ENCODE measurements at regions of chr14 and their contacts with region 1.

Region 1: DNA sequence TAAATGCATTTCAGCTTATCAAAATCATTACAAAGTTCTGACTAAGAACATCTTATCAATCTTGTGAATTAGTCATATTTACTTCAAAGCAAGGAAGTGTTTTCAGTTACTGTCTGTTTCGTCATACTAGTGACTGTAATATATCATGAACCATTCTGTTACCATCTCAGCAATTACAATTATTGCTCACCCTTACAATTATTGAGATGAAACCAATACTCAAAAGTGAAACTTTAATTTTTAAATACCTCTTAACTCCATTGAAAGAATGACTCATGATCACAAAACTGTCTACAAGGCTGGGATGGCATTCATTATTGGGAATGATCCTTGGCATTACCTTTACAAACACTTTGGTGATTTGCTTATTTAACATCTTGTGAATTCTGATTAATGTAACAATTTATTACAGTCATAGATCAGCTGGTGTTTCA is 90.3 kb downstream of the RPS6KA5 start:
- DNase-seq: no peak
- H3K4me3 Mint-ChIP-seq: peak overlapping the region; percentile 71
- H3K27ac Mint-ChIP-seq: peak overlapping the region; percentile 90
- H3K4me1 Mint-ChIP-seq: peaks cover 50% of the 10 kb centered on the region
- H3K27me3 Mint-ChIP-seq: no peaks in the 10 kb centered on the region

Region 2: DNA sequence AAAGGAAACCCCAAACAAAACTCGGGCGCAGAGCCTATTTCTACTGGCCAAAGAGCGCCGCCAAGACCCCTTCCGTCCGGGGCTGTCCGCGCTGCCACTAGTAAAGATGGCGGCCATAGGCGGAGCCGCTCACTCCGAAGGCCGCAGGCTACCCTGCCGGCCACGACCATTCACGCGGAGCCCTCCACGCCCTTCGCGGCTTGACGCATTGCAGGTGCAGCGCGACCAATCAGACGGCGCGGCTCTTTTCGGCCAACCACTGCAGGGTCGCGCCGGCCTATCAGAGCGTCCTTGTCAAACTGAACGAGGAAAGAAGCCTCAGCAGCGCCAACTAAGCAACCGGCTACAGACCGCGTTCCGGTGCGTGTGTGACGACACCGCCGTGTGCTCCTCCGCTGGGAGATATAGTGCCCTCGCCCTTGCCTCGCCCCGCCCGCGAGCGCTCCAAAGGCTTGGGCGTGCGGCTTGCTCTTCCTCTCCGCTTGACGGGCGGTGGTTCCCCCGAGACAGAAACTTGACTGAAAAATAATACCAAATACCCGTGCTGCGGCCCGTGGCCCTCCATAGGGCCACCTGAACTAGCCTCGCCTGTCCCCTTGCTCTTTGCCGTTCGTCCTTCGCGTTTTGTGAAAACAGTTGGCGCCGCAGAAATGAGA is 587.0 kb before region 1 on chr14:
- intact Hi-C with region 1: loop called (anchors 10 kb)
- DNase-seq: peak; percentile 98
- H3K4me3 Mint-ChIP-seq: no peak overlapping the region
- H3K27ac Mint-ChIP-seq: no peak overlapping the region
- H3K4me1 Mint-ChIP-seq: peaks cover 6% of the 10 kb centered on the region
- H3K27me3 Mint-ChIP-seq: peaks cover 1% of the 10 kb centered on the region

Region 3: DNA sequence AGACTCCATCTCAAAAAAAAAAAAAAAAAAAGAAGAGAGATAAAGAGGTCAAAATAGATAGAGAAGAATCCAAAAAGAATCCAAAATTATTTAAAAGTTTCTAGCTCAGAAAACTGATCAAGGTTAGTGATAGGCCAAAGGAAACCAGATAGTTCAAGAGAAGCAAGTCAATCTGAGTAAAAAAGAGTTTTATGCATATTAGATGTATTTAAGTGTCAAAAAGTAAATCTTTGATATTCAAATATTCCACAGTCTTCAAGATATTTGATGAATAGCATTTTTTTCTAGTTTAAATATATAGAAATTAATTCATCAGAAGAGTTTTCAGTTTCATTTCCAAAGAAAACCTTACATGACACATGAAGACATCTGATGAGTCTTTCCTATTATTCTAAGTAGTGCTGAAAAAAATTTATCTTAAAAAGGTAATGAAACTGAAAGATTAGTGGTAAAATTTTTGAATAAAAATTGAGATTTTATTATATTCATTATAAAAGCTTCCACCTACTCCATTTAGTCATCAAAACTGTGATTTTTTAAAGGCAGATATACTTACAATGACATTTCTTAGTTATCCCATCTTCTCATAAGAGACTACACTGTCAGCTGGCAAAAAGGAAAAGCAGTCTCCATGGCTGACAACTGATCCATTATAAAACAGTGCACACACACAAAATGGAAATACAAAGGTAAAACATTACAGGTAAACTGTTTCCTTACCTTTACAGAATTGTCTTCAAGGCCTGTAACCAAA is 21.7 kb after region 1 on chr14:
- intact Hi-C with region 1: loop called (anchors 1 kb)
- DNase-seq: no peak
- H3K4me3 Mint-ChIP-seq: no peak overlapping the region
- H3K27ac Mint-ChIP-seq: no peak overlapping the region
- H3K4me1 Mint-ChIP-seq: peaks cover 56% of the 10 kb centered on the region
- H3K27me3 Mint-ChIP-seq: no peaks in the 10 kb centered on the region

Region 4: DNA sequence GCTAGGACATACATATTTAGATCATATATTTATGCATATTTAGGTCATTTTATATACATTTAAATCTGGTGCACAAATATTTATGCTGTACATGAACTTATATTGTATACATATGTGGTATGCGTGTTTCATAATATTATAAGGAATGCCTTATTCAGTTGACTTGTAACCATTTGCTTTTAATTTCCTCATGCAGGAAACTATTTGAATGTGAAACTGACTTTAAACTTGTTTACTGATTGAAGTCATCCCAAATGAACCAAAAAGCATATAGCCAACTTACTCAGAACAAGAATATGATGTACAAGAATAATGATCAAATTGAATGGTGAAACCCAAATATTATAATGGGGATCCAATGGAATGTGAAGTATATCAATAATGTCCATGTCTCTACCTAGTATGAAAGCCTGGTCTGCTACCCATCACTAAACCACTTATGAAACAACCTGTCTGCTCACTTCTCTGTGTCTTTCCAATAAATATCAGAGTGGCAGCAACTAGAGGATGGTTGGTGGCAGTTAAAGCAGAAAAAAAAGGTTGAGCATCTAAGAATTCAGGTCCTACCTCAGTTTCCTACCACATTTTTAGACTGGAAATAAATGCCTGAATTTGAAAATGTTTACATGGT is 51.9 kb after region 1 on chr14:
- intact Hi-C with region 1: loop called (anchors 1 kb)
- DNase-seq: no peak
- H3K4me3 Mint-ChIP-seq: peak overlapping the region; percentile 76
- H3K27ac Mint-ChIP-seq: peak overlapping the region; percentile 94
- H3K4me1 Mint-ChIP-seq: peaks cover 83% of the 10 kb centered on the region
- H3K27me3 Mint-ChIP-seq: no peaks in the 10 kb centered on the region

Region 5: GRCh38 chr14:91067186-91067585 is 97.0 kb after region 1 on chr14:
- intact Hi-C with region 1: loop called (anchors 1 kb)
- DNase-seq: no peak
- H3K4me3 Mint-ChIP-seq: no peak overlapping the region
- H3K27ac Mint-ChIP-seq: peak overlapping the region; percentile 75
- H3K4me1 Mint-ChIP-seq: peaks cover 58% of the 10 kb centered on the region
- H3K27me3 Mint-ChIP-seq: no peaks in the 10 kb centered on the region

Region 6: DNA sequence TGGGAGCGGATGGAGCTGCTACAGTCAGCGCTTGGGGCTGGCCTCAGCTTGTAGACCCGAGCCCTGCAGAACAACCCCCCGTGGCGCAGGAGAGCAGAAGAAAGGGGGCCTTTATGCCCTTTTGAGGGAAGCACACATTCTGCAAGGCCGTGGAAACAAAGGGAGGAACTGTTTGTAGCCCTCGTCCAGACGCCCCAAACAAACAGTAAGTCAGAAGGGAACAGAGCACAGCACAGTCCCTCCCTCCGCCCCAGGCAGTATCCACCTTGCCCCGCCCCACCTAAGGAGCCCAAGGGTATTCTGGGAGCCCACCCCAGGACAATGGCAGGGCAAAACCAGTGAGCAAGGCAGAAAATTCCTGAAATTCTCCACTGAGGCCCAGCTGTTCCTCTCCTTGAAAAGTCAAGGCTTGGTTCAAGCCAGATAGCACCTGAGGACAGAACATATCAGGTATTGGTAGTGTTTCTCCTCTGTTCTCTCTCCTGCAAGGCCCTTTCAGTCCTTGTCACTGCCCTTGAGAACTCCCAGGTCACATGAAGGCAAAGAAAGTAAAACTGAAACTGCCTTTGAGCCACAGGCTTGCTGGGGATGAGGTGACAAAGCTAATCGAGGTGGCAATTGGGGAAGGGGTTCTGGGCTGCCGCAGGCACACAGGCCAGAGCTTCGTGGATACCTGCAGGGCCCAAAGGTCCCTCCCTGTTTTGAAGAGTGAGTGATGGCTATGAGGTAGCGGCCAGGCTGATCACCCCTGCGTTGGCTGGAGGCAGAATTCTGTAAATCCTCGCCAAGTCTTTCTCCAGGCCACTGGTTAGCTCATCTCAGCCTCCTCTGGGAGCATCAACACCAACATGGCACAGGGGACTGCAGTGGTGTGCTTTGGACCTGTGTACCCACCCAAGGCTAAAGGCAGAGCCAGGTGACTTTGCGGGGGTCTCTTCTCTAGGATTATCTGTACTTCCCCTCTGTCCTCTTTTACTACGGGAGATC is 144.2 kb after region 1 on chr14:
- intact Hi-C with region 1: loop called (anchors 1 kb)
- DNase-seq: peak; percentile 74
- H3K4me3 Mint-ChIP-seq: peak overlapping the region; percentile 95
- H3K27ac Mint-ChIP-seq: peak overlapping the region; percentile 94
- H3K4me1 Mint-ChIP-seq: peaks cover 81% of the 10 kb centered on the region
- H3K27me3 Mint-ChIP-seq: no peaks in the 10 kb centered on the region

Region 7: DNA sequence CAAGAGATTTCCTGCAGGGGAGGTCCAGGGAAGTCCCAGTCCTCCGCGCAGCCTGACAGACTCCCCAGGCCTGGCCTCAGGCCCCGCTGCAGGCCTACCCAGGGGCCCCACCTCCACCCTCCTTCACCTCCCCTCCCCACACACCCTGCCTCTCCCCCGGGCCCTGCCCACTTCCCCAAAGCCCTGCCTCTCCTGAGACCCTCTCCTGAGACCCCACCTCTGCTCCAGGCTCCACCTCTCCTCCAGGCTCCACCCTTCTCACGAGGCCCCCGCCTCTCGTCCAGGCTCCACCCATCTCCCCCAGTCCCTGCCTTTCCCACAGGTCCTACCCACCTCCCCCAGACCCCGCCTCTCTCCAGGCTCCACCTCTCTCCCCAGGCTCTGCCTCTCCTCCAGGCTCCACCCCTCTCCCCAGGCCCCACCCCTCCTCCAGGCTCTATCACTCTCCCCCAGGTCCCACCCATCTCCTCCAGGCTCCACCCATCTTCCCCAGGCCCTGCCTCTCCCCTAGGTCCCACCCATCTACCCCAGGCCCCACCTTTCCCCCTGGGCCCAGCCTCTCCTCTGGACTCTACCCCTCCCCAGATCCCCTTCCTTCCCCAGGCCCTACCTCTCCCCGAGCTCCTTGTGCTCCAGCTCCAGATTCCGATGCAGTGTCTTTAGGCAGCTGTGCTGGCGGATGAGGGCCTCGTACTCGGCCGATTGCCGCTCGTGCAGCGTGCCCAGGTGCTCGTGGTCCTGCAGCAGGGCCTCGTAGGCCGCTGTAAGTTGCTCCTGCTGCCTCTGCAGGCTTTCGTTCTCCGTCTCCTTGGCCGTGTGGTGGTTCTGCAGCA is 333.1 kb after region 1 on chr14:
- intact Hi-C with region 1: loop called (anchors 5 kb)
- DNase-seq: peak; percentile 36
- H3K4me3 Mint-ChIP-seq: peak overlapping the region; percentile 63
- H3K27ac Mint-ChIP-seq: peak overlapping the region; percentile 98
- H3K4me1 Mint-ChIP-seq: peaks cover 72% of the 10 kb centered on the region
- H3K27me3 Mint-ChIP-seq: no peaks in the 10 kb centered on the region

Measured in activated T-helper 1 cell treated with anti-CD3 and anti-CD28 coated beads, Interleukin-12 subunit alpha, Interleukin-12 subunit beta, Interleukin-2, Interleukin-4 antibody, amounts not matched to agents 30 ng/mL and 10 ng/mL and 1 ng/mL, durations not matched to agents 14 hours and 24 hours and 36 hours (primary cell).